WTC11 (cell line): ENCODE measurements at regions of chr1 and their contacts with region 1.

Region 1: GRCh38 chr1:9110669-9111356 is 18.1 kb downstream of the GPR157 start:
- DNase-seq: peak; percentile 98
- ATAC-seq: peak; percentile 96
- H3K4me3 Mint-ChIP-seq: no peak overlapping the region
- H3K27ac Mint-ChIP-seq: no peak overlapping the region
- H3K4me1 Mint-ChIP-seq: no peaks in the 10 kb centered on the region
- H3K27me3 Mint-ChIP-seq: no peaks in the 10 kb centered on the region
- CTCF ChIP-seq: peak; percentile 94

Region 2: GRCh38 chr1:8992936-8993687 is 117.7 kb before region 1 on chr1:
- CTCF ChIA-PET with region 1: no interaction called
- POLR2A ChIA-PET with region 1: no interaction called
- DNase-seq: no peak
- ATAC-seq: no peak
- H3K4me3 Mint-ChIP-seq: no peak overlapping the region
- H3K27ac Mint-ChIP-seq: no peak overlapping the region
- H3K4me1 Mint-ChIP-seq: no peaks in the 10 kb centered on the region
- H3K27me3 Mint-ChIP-seq: no peaks in the 10 kb centered on the region
- CTCF ChIP-seq: no peak

Region 3: GRCh38 chr1:9121496-9122409 is 10.9 kb after region 1 on chr1:
- CTCF ChIA-PET with region 1: interaction called, 14 read pairs
- POLR2A ChIA-PET with region 1: no interaction called
- DNase-seq: no peak
- ATAC-seq: no peak
- H3K4me3 Mint-ChIP-seq: no peak overlapping the region
- H3K27ac Mint-ChIP-seq: no peak overlapping the region
- H3K4me1 Mint-ChIP-seq: peaks cover 9% of the 10 kb centered on the region; the same call in 1 of the 2 replicates
- H3K27me3 Mint-ChIP-seq: no peaks in the 10 kb centered on the region
- CTCF ChIP-seq: no peak

Region 4: GRCh38 chr1:9166289-9167235 is 55.7 kb after region 1 on chr1:
- CTCF ChIA-PET with region 1: interaction called, 10 read pairs
- POLR2A ChIA-PET with region 1: no interaction called
- DNase-seq: no peak
- ATAC-seq: no peak
- H3K4me3 Mint-ChIP-seq: no peak overlapping the region
- H3K27ac Mint-ChIP-seq: peak overlapping the region; percentile 80; the same call in 1 of the 2 replicates
- H3K4me1 Mint-ChIP-seq: peaks cover 54% of the 10 kb centered on the region
- H3K27me3 Mint-ChIP-seq: no peaks in the 10 kb centered on the region
- CTCF ChIP-seq: no peak

Region 5: DNA sequence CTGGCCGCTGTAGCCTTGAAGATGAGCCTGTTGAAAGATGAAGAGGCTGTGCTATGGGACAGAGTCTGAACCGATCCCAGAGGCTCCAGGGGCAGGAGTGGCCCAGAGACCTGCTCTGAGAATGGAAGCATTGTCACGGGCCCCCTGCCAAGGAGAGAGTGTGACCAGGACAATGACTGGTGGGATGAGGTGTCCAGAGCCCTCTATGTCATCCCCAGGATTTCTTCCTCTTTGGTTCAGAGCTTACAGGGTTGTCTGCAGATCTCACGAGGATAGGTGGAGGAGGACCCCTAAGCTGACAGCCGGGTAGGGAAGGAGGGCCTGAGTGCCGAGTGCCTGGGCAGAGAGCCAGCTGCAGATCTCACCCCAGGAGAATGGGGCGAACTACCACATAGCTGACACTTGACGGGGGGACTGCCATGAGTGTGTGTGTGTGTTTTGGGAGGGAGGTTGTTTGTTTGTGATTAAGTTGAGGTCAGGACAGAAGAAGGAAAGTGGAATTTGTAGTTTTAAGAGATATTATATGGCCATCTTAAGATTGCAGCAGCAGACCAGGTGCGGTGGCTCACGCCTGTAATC is 566.1 kb after region 1 on chr1:
- CTCF ChIA-PET with region 1: no interaction called
- POLR2A ChIA-PET with region 1: no interaction called
- DNase-seq: no peak
- ATAC-seq: no peak
- H3K4me3 Mint-ChIP-seq: no peak overlapping the region
- H3K27ac Mint-ChIP-seq: no peak overlapping the region
- H3K4me1 Mint-ChIP-seq: peaks cover 4% of the 10 kb centered on the region
- H3K27me3 Mint-ChIP-seq: no peaks in the 10 kb centered on the region
- CTCF ChIP-seq: no peak